Caco-2 (cell line): ENCODE measurements at regions of chr16 and their contacts with region 1.

Region 1: DNA sequence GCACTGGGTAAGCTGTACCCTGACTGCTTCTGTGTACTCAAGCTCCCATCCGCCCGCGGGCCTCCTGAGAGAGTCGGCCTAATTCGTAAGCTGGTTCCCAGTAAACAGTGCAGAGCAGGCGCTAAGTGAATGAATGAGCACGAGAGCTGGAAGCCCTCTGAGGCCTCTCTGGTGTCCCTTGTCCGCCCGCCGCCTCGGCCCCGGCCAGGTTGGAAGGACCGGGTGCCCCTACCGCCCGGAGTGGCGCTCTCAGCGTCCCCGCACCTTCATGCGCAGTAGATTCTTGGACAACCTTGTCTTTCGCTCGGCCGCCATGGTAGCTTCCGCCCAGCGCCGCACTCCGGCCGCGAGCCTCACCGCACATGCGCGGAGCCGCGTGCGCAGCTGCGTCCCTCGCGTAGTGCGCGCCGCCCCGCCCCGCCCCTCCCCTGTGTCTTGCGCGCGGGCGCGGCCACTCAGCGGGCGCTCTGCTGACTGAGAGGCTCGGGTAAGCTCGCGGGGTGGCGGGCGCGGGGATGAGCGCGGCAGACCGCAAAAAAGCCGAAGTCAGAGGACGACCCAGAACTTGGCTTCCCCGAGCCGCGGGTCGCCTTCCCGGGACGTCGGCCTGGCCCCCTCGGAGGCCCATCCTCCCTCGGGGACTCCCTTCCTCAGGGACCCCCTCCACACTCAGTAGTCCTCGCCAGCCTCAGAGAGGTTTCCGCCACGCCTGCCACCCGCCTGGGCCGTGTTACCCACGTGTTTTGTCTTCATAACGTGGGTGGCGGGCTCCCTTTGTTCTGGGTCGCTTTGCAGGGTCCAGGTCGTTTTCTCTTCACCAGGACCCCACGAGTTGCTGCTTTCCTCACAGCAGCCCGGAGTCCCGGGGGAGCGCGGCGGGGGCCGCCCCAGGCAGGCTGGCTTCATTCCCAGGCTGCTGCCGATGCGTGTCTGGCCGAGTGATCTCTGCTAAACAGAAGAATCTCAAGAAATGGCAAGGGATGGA is at the start of gene MPHOSPH6:
- DNase-seq: peak; percentile 90 to 94
- H3K4me3 ChIP-seq: peak within 1 kb of the TSS; percentile 79
- H3K4me3 Mint-ChIP-seq: peak within 1 kb of the TSS; percentile 92
- H3K27ac Mint-ChIP-seq: peak within 1 kb of the TSS; percentile 94
- H3K4me1 ChIP-seq: peaks cover 8% of the 10 kb centered on the region
- H3K4me1 Mint-ChIP-seq: peaks cover 7% of the 10 kb centered on the region
- H3K27me3 ChIP-seq: no peaks in the 10 kb centered on the region
- H3K27me3 Mint-ChIP-seq: peaks cover 11% of the 10 kb centered on the region
- CTCF ChIP-seq: no peak
- total RNA-seq, gene MPHOSPH6: 41.9 and 42.3 TPM in 2 replicates

Region 2: GRCh38 chr16:82050909-82051357 is 119.2 kb before region 1 on chr16:
- CTCF ChIA-PET with region 1: no interaction called
- POLR2A ChIA-PET with region 1: no interaction called
- intact Hi-C with region 1: loop called (anchors 2 kb)
- DNase-seq: peak in 1 of 2 experiments; percentile 67
- H3K4me3 ChIP-seq: no peak overlapping the region
- H3K4me3 Mint-ChIP-seq: peak overlapping the region; percentile 56
- H3K27ac Mint-ChIP-seq: peak overlapping the region; percentile 84
- H3K4me1 ChIP-seq: peaks cover 72% of the 10 kb centered on the region
- H3K4me1 Mint-ChIP-seq: peaks cover 68% of the 10 kb centered on the region
- H3K27me3 ChIP-seq: no peaks in the 10 kb centered on the region
- H3K27me3 Mint-ChIP-seq: no peaks in the 10 kb centered on the region
- CTCF ChIP-seq: no peak